Activated T-helper 2 cell treated with anti-CD3 and anti-CD28 coated beads, Interferon-gamma antibody, Interleukin-2, Interleukin-4, amounts not matched to agents 10 μg/mL and 5 μg/mL and 100 μg/mL, durations not matched to agents 14 hours and 24 hours and 36 hours (primary cell): ENCODE measurements at regions of chr12 and their contacts with region 1.

Region 1: DNA sequence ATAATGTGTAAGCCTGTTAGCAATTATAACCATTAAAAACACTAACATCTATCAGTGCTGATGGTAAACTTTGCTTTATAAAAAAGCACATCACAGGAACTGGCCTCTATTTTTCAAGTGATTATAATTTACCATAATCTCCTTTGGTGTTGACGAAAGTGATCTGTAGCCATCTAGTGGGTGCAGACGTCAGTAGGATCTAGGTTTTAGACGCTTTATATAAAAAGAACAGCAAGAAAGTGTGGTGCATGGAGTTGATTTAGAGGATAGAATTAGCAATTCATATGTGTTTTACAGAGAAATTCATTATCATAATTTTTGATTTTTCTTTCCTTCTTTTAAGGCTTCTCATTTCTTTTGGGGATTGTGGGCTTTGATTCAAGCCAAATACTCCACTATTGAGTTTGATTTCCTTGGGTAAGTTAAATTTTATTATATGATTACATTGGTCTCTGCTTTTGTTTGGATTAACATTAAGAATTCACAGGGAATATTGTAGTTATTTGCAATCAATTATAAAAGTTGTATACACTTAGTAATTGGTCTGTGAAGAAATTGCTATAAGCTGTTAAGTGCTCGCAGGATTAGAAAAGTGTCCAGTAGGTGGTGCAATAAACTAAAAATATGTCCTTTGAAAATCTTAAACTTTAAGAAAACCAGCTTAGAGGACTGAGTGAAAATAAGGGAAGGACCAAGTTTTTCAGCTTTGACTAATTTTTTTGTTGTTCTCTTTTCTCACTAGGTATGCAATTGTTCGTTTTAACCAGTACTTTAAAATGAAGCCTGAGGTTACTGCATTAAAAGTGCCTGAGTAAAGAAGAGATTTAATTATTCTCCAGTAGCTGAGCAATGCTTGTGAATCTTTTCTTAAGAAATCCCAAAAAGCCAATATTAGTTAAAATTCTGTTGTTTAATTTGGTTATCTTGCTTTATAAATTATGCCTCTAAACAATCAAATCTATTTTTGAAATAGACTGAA is 59.5 kb downstream of the ETNK1 start:
- DNase-seq: no peak
- H3K4me3 Mint-ChIP-seq: no peak overlapping the region
- H3K27ac Mint-ChIP-seq: peak overlapping the region; percentile 7
- H3K4me1 Mint-ChIP-seq: peaks cover 25% of the 10 kb centered on the region
- H3K27me3 Mint-ChIP-seq: no peaks in the 10 kb centered on the region

Region 2: DNA sequence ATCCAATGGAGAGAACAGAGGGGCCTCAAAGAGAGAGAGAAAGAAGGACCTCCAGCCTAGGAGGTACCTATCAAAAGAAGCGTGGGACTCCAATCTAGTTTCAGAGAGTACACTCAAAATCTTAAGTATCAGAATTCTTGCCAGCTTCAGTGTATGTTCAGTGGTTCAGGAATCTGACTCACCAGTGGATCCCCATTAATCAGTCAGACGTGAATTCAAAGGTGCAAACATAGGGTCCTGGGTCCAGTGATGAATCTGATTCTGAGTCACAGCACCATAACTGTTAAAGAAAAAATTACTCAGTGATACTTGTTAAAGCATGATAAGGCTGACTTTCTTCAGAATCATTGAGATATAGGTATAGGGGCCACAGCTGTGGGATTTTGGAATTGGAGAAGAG is 26.2 kb before region 1 on chr12:
- intact Hi-C with region 1: no loop called
- DNase-seq: no peak
- H3K4me3 Mint-ChIP-seq: no peak overlapping the region
- H3K27ac Mint-ChIP-seq: peak overlapping the region; percentile 68
- H3K4me1 Mint-ChIP-seq: peaks cover 30% of the 10 kb centered on the region
- H3K27me3 Mint-ChIP-seq: no peaks in the 10 kb centered on the region

Region 3: DNA sequence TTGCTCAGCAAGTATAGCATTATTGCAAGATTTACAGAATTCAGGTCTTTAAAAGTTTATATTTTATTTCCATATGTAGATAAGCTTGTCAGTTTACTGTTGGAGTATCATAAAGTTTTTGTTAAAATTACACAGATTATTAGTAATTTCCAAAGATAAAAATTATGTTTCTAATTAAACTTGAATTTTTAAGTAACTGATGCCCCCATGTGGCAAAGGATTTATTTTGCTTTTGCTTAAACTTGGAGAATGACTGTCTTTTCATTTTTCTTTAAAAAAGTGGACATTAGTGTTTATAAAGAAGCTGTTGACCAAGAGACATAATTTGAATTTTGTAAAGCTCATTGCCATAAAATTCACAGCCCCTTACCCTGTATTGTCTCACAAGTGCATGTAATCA is 13.7 kb before region 1 on chr12:
- intact Hi-C with region 1: loop called (anchors 2 kb)
- DNase-seq: no peak
- H3K4me3 Mint-ChIP-seq: no peak overlapping the region
- H3K27ac Mint-ChIP-seq: no peak overlapping the region
- H3K4me1 Mint-ChIP-seq: peaks cover 10% of the 10 kb centered on the region
- H3K27me3 Mint-ChIP-seq: no peaks in the 10 kb centered on the region